Naive thymus-derived CD4-positive, alpha-beta T cell (primary cell): ENCODE measurements at regions of chr11 and their contacts with region 1.

Region 1: DNA sequence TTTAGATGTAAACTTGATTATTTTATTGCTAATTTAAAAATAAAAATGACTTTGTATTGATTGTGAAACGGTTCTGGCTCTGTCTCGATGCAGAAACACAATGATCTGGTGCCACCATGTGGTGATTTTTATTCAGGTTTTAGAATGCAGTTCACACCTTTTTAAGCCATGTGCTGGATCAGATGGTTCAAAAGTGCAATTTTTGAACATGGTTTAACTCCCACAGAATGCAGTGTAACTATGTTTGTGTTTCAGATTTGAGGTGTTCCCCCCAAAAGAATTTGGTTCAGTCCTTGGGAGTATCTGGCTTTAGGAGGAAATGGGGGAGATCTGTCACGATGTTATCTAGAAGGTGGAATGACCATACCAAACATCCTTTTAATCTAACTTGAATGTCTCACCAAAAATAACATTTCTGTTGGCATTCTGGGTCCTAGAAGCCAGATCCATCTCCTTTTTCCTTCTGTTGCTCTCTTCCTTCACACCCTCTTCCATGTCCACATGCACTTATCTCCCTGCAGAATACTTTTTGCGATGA is 7.9 kb downstream of the MRPL16 start:
- DNase-seq: peak in 7 of 9 donors; percentile 43 to 70 (median 65)
- ATAC-seq: peak; percentile 81
- H3K4me3 ChIP-seq: no peak overlapping the region
- H3K4me3 Mint-ChIP-seq: no peak overlapping the region
- H3K27ac ChIP-seq: no peak overlapping the region
- H3K27ac Mint-ChIP-seq: peak overlapping the region in 1 of 9 donors; percentile 45
- H3K4me1 ChIP-seq: no peaks in the 10 kb centered on the region
- H3K4me1 Mint-ChIP-seq: peaks cover 0 to 26% (median 0%) of the 10 kb centered on the region in 7 donors
- H3K27me3 ChIP-seq: no peaks in the 10 kb centered on the region
- H3K27me3 Mint-ChIP-seq: no peaks in the 10 kb centered on the region

Region 2: DNA sequence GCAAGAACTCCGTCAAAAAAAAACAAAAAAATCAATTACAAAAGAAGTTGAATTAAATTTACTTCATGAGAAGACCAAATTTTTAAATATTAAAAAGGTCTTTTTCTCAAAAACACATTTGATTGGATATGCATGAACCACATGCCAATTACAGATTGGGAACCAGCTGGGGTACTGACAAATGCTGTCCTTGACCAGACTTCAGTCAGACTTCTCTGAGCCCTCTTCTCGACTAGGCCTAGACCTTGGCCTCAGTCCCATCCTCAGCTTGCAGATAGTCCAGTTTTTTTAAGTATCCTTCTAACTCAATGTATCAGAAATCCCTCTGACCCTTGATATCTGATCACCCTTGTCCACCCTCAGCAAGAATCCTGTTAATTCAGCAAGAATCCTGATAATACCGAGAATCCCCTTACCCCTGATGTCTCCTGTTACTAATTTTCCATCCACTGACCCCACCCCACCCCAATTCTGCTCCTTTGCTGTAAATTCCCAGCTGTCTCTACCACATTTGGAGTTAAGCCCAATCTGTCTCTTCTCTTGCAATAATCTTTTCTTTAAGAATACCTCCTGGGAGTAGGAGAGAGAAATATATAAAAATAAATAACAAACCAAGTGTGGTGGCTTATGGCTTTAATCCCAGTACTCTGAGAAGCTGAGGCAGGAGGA is 260.4 kb before region 1 on chr11:
- CTCF ChIA-PET with region 1: interaction called, 3 read pairs
- POLR2A ChIA-PET with region 1: no interaction called
- intact Hi-C with region 1: loop called in 1 of 2 experiments (anchors 1 kb)
- DNase-seq: no peak
- ATAC-seq: no peak
- H3K4me3 ChIP-seq: no peak overlapping the region
- H3K4me3 Mint-ChIP-seq: no peak overlapping the region
- H3K27ac ChIP-seq: no peak overlapping the region
- H3K27ac Mint-ChIP-seq: no peak overlapping the region
- H3K4me1 ChIP-seq: no peaks in the 10 kb centered on the region
- H3K4me1 Mint-ChIP-seq: peaks cover 7 to 9% (median 8%) of the 10 kb centered on the region in 7 donors
- H3K27me3 ChIP-seq: no peaks in the 10 kb centered on the region
- H3K27me3 Mint-ChIP-seq: peaks cover 0 to 6% (median 0%) of the 10 kb centered on the region in 5 donors

Region 3: GRCh38 chr11:59680287-59681154 is 122.2 kb before region 1 on chr11:
- CTCF ChIA-PET with region 1: no interaction called
- POLR2A ChIA-PET with region 1: no interaction called
- intact Hi-C with region 1: loop called in 1 of 2 experiments (anchors 2 kb)
- DNase-seq: peak in 8 of 9 donors; percentile 43 to 66 (median 58)
- ATAC-seq: peak; percentile 97
- H3K4me3 ChIP-seq: no peak overlapping the region
- H3K4me3 Mint-ChIP-seq: no peak overlapping the region
- H3K27ac ChIP-seq: no peak overlapping the region
- H3K27ac Mint-ChIP-seq: no peak overlapping the region
- H3K4me1 ChIP-seq: no peaks in the 10 kb centered on the region
- H3K4me1 Mint-ChIP-seq: no peaks in the 10 kb centered on the region
- H3K27me3 ChIP-seq: no peaks in the 10 kb centered on the region
- H3K27me3 Mint-ChIP-seq: peaks cover 18 to 39% (median 23%) of the 10 kb centered on the region in 5 donors

Region 4: GRCh38 chr11:59746111-59746510 is 56.6 kb before region 1 on chr11:
- CTCF ChIA-PET with region 1: interaction called, 10 read pairs
- POLR2A ChIA-PET with region 1: interaction called, 3 read pairs
- intact Hi-C with region 1: no loop called
- DNase-seq: no peak
- ATAC-seq: no peak
- H3K4me3 ChIP-seq: no peak overlapping the region
- H3K4me3 Mint-ChIP-seq: no peak overlapping the region
- H3K27ac ChIP-seq: no peak overlapping the region
- H3K27ac Mint-ChIP-seq: no peak overlapping the region
- H3K4me1 ChIP-seq: no peaks in the 10 kb centered on the region
- H3K4me1 Mint-ChIP-seq: no peaks in the 10 kb centered on the region
- H3K27me3 ChIP-seq: no peaks in the 10 kb centered on the region
- H3K27me3 Mint-ChIP-seq: peaks cover 26 to 48% (median 36%) of the 10 kb centered on the region in 5 donors

Region 5: GRCh38 chr11:59759900-59760299 is 42.8 kb before region 1 on chr11:
- CTCF ChIA-PET with region 1: interaction called, 79 read pairs
- POLR2A ChIA-PET with region 1: interaction called, 24 read pairs
- intact Hi-C with region 1: no loop called
- DNase-seq: no peak
- ATAC-seq: no peak
- H3K4me3 ChIP-seq: no peak overlapping the region
- H3K4me3 Mint-ChIP-seq: no peak overlapping the region
- H3K27ac ChIP-seq: no peak overlapping the region
- H3K27ac Mint-ChIP-seq: no peak overlapping the region
- H3K4me1 ChIP-seq: peaks cover 6 to 8% of the 10 kb centered on the region in 2 donors
- H3K4me1 Mint-ChIP-seq: peaks cover 2 to 52% (median 20%) of the 10 kb centered on the region in 7 donors
- H3K27me3 ChIP-seq: no peaks in the 10 kb centered on the region
- H3K27me3 Mint-ChIP-seq: peaks cover 0 to 12% (median 0%) of the 10 kb centered on the region in 5 donors

Region 6: GRCh38 chr11:59767225-59767611 is 35.5 kb before region 1 on chr11:
- CTCF ChIA-PET with region 1: interaction called, 10 read pairs
- POLR2A ChIA-PET with region 1: interaction called, 7 read pairs
- intact Hi-C with region 1: no loop called
- DNase-seq: peak in 6 of 9 donors; percentile 10 to 55 (median 40)
- ATAC-seq: peak; percentile 80
- H3K4me3 ChIP-seq: peak overlapping the region; percentile 32
- H3K4me3 Mint-ChIP-seq: peak overlapping the region in 5 of 10 donors; percentile 27 to 67 (median 58)
- H3K27ac ChIP-seq: no peak overlapping the region
- H3K27ac Mint-ChIP-seq: peak overlapping the region in 3 of 9 donors; percentile 24 to 81 (median 49)
- H3K4me1 ChIP-seq: peaks cover 31 to 45% of the 10 kb centered on the region in 2 donors
- H3K4me1 Mint-ChIP-seq: peaks cover 7 to 33% (median 27%) of the 10 kb centered on the region in 7 donors
- H3K27me3 ChIP-seq: no peaks in the 10 kb centered on the region
- H3K27me3 Mint-ChIP-seq: peaks cover 0 to 4% (median 0%) of the 10 kb centered on the region in 5 donors